CD8-positive, alpha-beta memory T cell (primary cell): ENCODE measurements at regions of chr6 and their contacts with region 1.

Region 1: DNA sequence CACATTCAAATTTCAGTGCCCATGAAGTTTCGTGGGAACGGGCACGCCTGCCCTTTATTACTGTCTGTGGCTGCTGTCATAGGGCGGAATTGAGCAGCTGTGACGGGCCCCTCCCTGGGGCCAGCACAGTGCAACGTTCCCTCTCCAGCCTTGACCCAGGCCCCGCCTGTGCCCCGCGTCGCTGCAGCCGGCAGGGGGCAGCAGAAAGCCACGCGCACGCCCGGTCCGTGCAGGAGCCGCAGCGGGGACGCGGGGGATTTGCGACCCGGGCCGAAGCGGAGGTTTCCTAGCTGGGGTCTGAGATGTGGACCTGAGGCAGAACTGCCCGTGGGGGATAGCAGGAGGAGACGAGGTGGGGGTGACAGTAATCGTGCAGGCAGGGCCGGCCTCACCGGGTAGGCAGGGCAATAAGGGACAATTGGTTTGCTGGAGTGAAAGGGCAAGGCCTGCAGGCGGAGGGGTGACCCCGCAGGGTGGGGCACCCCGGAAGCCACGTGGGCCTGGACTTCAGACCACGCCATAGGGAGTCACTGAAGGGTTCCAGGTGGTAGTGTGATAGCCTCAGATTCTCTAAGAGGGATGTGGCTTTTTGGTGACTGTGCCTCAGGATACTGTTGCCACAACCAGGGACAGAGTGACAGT is 54.4 kb downstream of the SYTL3 start:
- DNase-seq: peak; percentile 68 to 77 (median 70)
- H3K4me3 ChIP-seq: peak overlapping the region; percentile 62
- H3K4me3 Mint-ChIP-seq: peak overlapping the region; percentile 68 to 92 (median 83)
- H3K27ac ChIP-seq: no peak overlapping the region
- H3K27ac Mint-ChIP-seq: peak overlapping the region; percentile 33 to 91 (median 80)
- H3K4me1 ChIP-seq: peaks cover 6% of the 10 kb centered on the region
- H3K4me1 Mint-ChIP-seq: peaks cover 7 to 33% (median 12%) of the 10 kb centered on the region in 3 donors
- H3K27me3 ChIP-seq: no peaks in the 10 kb centered on the region
- H3K27me3 Mint-ChIP-seq: no peaks in the 10 kb centered on the region

Region 2: DNA sequence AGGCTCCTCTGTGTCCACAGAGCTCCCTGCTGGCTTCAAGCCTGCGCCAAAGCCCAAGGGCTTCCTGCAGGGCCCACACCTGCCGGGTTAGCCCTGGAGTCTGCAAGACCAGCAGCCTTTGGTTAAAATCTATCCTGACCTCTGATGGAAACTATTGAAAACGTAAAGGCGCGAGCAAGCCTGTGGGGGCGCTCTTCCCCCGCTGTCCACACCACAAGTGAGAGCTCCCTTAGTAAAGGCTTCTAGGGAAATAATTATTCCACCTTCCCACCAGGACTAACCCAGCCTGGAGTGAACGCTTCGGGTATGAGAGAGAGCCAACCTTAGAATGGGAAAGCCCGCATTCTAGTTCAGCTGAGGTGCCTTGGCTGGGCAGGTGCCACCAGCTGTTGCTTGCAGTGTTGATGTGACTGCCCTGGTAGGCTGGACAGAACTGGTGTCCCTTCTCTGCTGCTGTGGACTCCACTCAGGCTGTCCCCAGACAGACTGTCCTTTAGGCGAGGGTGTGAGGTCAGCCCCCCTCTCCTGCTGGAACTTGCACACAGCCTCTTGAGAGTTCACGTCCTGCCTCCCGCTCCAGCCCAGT is 14.3 kb after region 1 on chr6:
- CTCF ChIA-PET with region 1: interaction called, 16 read pairs
- POLR2A ChIA-PET with region 1: no interaction called
- DNase-seq: no peak
- H3K4me3 ChIP-seq: no peak overlapping the region
- H3K4me3 Mint-ChIP-seq: peak overlapping the region; percentile 55 to 88 (median 79)
- H3K27ac ChIP-seq: peak overlapping the region; percentile 57
- H3K27ac Mint-ChIP-seq: peak overlapping the region; percentile 90 to 99 (median 98)
- H3K4me1 ChIP-seq: peaks cover 65% of the 10 kb centered on the region
- H3K4me1 Mint-ChIP-seq: peaks cover 67 to 84% (median 78%) of the 10 kb centered on the region in 3 donors
- H3K27me3 ChIP-seq: no peaks in the 10 kb centered on the region
- H3K27me3 Mint-ChIP-seq: no peaks in the 10 kb centered on the region

Region 3: DNA sequence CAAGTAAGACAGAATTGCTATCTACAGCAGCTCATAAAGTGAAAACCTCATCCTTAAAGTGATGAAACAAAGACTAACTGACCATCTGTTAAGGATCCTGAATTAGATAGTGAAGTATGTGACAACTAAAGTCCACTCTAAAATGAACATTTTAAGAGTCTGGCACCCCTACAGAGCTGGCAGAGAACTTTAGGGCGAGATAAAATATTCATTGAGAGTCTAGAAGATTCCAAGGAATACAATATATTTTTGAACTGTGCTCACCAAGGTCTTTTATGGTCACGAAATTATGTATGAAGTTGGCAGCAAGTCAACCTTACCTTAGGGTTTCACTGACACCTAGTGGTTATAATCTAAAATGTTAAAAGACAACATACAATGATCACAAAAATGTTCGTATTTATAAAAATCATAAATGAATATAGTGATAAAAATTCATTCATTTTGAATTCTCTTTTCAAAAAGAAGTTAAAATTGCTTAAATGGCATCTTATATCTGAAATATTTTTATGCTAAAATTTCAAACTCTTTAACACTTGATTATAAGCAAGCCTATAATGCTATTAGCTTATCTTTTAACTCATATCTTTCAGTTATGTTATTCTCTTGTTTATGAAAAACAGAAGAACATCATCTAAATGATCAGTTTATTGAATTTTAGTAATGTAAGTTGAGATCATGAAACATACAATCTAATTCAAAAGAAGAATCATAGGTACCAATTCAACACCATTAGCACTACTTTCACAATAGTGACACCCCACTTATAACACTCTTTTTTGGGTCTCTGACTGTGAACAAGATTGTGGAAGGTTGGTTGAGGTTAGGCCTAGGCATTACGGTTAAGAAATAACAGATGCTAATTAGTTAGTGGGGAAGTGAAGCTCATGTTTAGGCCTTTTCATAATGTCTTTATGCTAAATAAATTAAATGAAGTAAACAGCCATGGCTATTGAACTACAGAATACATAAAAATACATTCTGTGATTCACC is 268.2 kb after region 1 on chr6:
- CTCF ChIA-PET with region 1: interaction called, 75 read pairs
- POLR2A ChIA-PET with region 1: interaction called, 6 read pairs
- DNase-seq: peak in 2 of 5 donors; percentile 43 to 55
- H3K4me3 ChIP-seq: no peak overlapping the region
- H3K4me3 Mint-ChIP-seq: no peak overlapping the region
- H3K27ac ChIP-seq: no peak overlapping the region
- H3K27ac Mint-ChIP-seq: peak overlapping the region in 1 of 8 donors; percentile 50
- H3K4me1 ChIP-seq: no peaks in the 10 kb centered on the region
- H3K4me1 Mint-ChIP-seq: peaks cover 0 to 4% (median 4%) of the 10 kb centered on the region in 3 donors
- H3K27me3 ChIP-seq: no peaks in the 10 kb centered on the region
- H3K27me3 Mint-ChIP-seq: no peaks in the 10 kb centered on the region